ENCODE measurements at regions of chr1 and their contacts with region 1.

Region 1: DNA sequence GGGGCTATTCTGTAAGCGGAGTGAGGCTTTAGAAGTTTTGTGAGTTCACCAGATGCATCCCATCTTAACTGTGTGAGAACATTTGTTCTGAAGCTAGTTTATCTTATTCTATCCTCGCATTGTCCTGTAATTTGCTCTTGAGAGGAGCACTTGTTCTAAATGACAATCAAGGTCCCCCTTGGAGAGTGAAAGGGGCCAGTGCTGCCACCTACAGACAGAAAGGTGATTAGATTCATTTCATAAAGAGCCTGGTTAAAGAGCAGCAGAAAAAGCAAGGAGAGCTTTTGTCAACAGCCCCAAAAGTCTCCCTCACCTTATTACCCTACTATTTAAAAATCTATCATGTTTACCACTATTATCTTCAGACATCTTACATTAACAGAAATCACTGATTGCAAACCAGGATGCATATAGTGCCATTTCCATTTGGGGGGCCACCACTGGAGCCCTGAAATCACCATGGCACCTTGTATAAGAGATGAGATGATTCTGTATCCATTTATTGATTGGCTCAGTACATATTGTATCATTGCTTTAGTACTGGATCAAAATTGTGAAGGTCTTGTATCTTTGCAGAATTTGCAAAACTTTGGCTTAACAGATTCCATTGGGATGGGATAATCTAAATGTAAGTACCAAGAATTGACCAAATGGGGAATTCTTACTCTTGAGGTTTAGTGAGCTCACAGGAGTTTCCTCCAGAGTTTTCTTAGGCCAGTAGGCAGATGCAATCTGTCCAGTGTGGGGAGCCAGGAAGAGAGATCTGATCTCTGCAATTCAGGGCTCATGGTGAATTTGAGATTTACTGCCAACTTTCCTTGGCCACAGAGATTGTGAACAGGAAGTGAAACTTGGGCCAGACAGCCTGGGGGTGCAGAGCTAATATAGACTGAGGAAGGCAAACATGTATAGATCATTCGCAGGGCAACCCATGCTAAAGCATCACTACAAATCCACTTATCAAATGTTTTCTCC is 64.3 kb upstream of the TRABD2B start:
- DNase-seq: peak; percentile 69
- H3K4me3 ChIP-seq: no peak overlapping the region; a peak in 1 of 4 replicates
- H3K27ac ChIP-seq: no peak overlapping the region; a peak in 1 of 4 replicates
- H3K4me1 ChIP-seq: no peaks in the 10 kb centered on the region; a peak in 1 of 4 replicates
- H3K27me3 ChIP-seq: no peaks in the 10 kb centered on the region
- CTCF ChIP-seq: peak; percentile 76
- EP300 ChIP-seq: no peak
- RAD21 ChIP-seq: peak; percentile 86

Region 2: GRCh38 chr1:47738560-47739182 is 322.8 kb before region 1 on chr1:
- CTCF ChIA-PET with region 1: interaction called, 62 read pairs
- POLR2A ChIA-PET with region 1: interaction called, 3 read pairs
- DNase-seq: peak; percentile 74
- H3K4me3 ChIP-seq: no peak overlapping the region; a peak in 1 of 4 replicates
- H3K27ac ChIP-seq: no peak overlapping the region
- H3K4me1 ChIP-seq: no peaks in the 10 kb centered on the region
- H3K27me3 ChIP-seq: no peaks in the 10 kb centered on the region
- CTCF ChIP-seq: peak; percentile 70
- EP300 ChIP-seq: no peak
- RAD21 ChIP-seq: peak; percentile 89

Region 3: GRCh38 chr1:47997289-47998200 is 63.9 kb before region 1 on chr1 and contains the start of gene TRABD2B:
- CTCF ChIA-PET with region 1: interaction called, 92 read pairs
- POLR2A ChIA-PET with region 1: no interaction called
- DNase-seq: peak; percentile 96
- H3K4me3 ChIP-seq: peak within 1 kb of the TSS; percentile 56 to 65
- H3K27ac ChIP-seq: no peak within 1 kb of the TSS
- H3K4me1 ChIP-seq: peaks cover 0 to 3% of the 10 kb centered on the region in 2 experiments; a peak in 1 of 4 replicates
- H3K27me3 ChIP-seq: peaks cover 4% of the 10 kb centered on the region; the same call in 1 of the 2 replicates
- CTCF ChIP-seq: peak; percentile 92
- EP300 ChIP-seq: no peak
- RAD21 ChIP-seq: peak; percentile 73
- polyA plus RNA-seq, gene TRABD2B: 0.02 and 0.03 TPM in 2 replicates

Region 4: DNA sequence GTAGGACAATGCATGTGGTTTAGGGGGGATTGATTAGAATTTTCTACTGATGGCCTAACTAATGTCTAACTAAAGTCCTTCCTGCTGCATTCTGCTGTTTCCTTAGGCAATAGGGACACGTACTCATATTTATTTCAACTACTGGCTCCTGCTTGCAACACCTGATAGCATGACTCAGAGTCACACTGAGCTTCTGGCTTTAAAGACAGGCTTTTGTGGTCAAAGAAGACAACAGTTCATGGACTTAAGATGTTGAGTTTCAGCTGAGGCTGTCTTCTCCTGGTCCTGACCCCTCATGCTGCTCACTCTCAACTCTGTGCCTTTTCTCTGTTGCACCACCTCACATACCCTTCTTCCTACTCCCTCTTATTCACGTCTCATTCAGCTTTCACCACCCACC is 35.2 kb before region 1 on chr1:
- CTCF ChIA-PET with region 1: interaction called, 14 read pairs
- POLR2A ChIA-PET with region 1: no interaction called
- DNase-seq: no peak
- H3K4me3 ChIP-seq: no peak overlapping the region
- H3K27ac ChIP-seq: no peak overlapping the region
- H3K4me1 ChIP-seq: peaks cover 0 to 9% of the 10 kb centered on the region in 2 experiments; a peak in 1 of 4 replicates
- H3K27me3 ChIP-seq: no peaks in the 10 kb centered on the region
- CTCF ChIP-seq: no peak
- EP300 ChIP-seq: no peak
- RAD21 ChIP-seq: no peak

Region 5: GRCh38 chr1:48073798-48074530 is 12.5 kb after region 1 on chr1:
- CTCF ChIA-PET with region 1: interaction called, 23 read pairs
- POLR2A ChIA-PET with region 1: no interaction called
- DNase-seq: no peak
- H3K4me3 ChIP-seq: no peak overlapping the region
- H3K27ac ChIP-seq: no peak overlapping the region
- H3K4me1 ChIP-seq: no peaks in the 10 kb centered on the region
- H3K27me3 ChIP-seq: no peaks in the 10 kb centered on the region
- CTCF ChIP-seq: no peak
- EP300 ChIP-seq: no peak
- RAD21 ChIP-seq: no peak

Region 6: GRCh38 chr1:48329486-48329885 is 268.0 kb after region 1 on chr1:
- CTCF ChIA-PET with region 1: no interaction called
- POLR2A ChIA-PET with region 1: no interaction called
- DNase-seq: no peak
- H3K4me3 ChIP-seq: no peak overlapping the region
- H3K27ac ChIP-seq: no peak overlapping the region
- H3K4me1 ChIP-seq: no peaks in the 10 kb centered on the region
- H3K27me3 ChIP-seq: no peaks in the 10 kb centered on the region
- CTCF ChIP-seq: no peak
- EP300 ChIP-seq: no peak
- RAD21 ChIP-seq: no peak